WTC11 (cell line): ENCODE measurements at regions of chr11 and their contacts with region 1.

Region 1: GRCh38 chr11:79440441-79441194 is at the start of gene TENM4:
- DNase-seq: peak; percentile 61
- ATAC-seq: peak; percentile 8
- H3K4me3 Mint-ChIP-seq: peak within 1 kb of the TSS; percentile 86
- H3K27ac Mint-ChIP-seq: no peak within 1 kb of the TSS
- H3K4me1 Mint-ChIP-seq: peaks cover 36% of the 10 kb centered on the region
- H3K27me3 Mint-ChIP-seq: peaks cover 68% of the 10 kb centered on the region
- CTCF ChIP-seq: peak; percentile 10; the same call in 1 of the 2 replicates
- total RNA-seq, gene TENM4: 17.2 to 25.0 TPM (median 18.1 TPM) in 3 replicates

Region 2: DNA sequence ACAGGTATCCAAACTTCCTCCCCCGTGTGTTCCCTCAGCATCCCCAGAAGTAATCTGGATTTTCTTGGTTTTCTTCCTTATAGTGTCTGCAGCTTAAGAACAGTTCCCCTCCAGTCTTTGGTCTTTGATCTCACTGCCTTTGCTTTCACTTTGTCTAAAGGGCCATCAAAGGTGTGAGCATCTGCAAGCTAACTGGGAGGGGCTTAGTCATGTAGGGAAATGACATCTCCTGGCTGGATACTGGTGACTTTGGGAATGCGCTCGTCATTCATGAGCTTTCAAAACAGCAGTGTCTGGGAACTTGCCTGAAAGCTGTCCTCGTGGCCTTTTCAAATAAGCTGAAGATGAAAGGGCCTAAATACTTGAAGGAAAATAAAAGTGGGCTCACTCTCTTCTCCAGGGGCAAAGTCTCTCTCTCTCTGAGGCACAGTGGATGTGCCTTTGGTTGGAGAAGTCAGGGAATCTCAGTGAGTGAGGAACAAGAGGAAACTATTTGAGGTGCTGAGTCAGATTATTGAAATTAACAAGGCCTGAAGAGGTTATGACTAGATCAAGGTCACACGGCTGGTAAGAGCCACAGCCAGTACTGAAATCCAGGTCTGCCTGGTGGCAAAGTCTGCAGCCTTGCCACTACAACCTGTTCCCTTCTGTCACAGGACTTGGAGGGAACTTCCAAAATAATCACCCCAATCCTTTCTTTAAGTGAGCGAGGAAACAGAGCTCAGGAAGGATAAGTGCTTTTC is 45.8 kb after region 1 on chr11:
- CTCF ChIA-PET with region 1: interaction called, 10 read pairs
- POLR2A ChIA-PET with region 1: interaction called, 5 read pairs
- DNase-seq: no peak
- ATAC-seq: peak; percentile 25
- H3K4me3 Mint-ChIP-seq: peak overlapping the region; percentile 41
- H3K27ac Mint-ChIP-seq: no peak overlapping the region; the same call in 1 of the 2 replicates
- H3K4me1 Mint-ChIP-seq: peaks cover 39% of the 10 kb centered on the region
- H3K27me3 Mint-ChIP-seq: peaks cover 16% of the 10 kb centered on the region
- CTCF ChIP-seq: no peak

Region 3: DNA sequence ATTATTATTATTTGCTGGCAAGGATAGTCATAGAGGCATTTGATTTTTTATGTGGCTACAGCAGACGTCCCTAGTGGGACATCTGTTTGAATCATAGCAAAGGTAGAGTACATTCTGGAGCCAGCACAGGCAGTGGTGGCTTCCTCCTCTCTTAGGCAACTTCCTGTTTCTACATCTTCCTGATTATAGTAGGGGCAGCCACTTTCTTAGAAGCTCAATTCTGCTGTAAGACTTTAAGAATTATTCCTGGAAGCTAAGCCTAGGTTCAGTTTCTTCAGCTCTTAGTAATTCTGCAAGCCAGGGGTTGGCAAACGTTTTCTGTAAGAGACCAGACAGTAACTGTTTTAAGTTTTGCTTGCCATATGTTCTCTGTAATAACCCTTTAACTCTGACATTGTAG is 129.5 kb after region 1 on chr11:
- CTCF ChIA-PET with region 1: no interaction called
- POLR2A ChIA-PET with region 1: no interaction called
- DNase-seq: no peak
- ATAC-seq: no peak
- H3K4me3 Mint-ChIP-seq: no peak overlapping the region
- H3K27ac Mint-ChIP-seq: no peak overlapping the region
- H3K4me1 Mint-ChIP-seq: no peaks in the 10 kb centered on the region
- H3K27me3 Mint-ChIP-seq: peaks cover 10% of the 10 kb centered on the region
- CTCF ChIP-seq: no peak